ENCODE measurements at regions of chr2 and their contacts with region 1.

Region 1: DNA sequence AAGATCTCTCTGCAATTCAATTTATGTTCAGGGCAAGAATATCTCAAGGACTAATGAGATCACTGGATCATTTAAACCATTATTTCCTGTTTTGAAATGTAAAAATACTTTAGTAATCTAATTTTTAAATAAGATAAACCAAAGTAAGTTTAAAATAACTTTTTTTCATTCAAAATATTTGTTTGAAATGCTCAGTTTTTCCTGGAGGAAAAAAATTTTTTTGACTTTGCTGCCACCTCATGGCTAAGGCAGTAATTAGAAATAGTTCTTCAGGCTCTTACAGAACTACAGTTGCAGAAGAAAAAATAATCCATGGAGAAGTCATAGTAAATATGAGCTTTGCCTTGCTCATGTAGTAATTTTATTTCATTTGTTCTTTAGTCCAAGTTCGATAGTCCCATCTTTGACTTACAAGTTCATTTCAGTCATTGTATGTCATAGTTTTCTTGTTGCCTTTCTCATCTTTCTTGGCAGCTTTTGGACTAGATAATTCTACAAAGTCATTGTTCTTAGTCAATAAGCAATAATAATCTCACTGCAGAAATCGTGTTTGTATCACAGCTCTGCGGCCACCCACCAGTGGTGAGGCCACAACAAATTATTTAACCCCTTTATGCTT is 127.4 kb downstream of the DPP4 start:
- DNase-seq: no peak
- H3K4me3 ChIP-seq: no peak overlapping the region
- H3K27me3 ChIP-seq: no peaks in the 10 kb centered on the region
- CTCF ChIP-seq: peak; percentile 58

Region 2: DNA sequence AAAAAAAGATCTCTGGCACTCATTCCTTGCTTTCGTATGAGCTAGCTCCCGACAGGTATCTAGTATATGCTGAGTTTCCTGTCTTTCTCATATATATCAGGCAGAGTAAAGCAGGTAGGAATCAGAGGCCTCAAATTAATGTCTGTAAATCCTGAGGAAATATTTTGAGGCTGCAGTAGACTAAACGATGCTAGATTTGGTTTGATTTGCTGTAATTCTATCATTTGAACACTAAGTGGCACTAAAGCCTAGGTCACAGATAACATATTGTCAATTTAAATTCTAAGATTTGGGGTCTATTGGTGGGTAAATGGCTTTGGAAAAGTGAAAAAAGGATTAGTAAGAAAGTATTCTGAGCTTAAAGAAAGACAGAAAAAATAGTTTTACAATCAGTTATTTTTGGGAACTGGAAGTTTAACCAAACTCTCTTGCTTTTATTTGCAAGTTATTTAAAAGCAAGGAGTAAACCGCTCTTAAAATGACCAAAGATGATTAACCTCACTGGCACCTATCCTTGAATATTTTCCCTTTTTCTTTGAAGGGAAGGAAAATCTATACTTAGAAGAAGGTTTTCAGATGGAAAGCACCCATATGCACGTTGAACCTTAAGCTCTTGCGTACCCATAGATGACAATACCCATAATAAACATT is 360.0 kb before region 1 on chr2:
- CTCF ChIA-PET with region 1: interaction called, 37 read pairs
- POLR2A ChIA-PET with region 1: no interaction called
- DNase-seq: peak; percentile 1
- H3K4me3 ChIP-seq: no peak overlapping the region
- H3K27me3 ChIP-seq: no peaks in the 10 kb centered on the region
- CTCF ChIP-seq: peak; percentile 62

Region 3: DNA sequence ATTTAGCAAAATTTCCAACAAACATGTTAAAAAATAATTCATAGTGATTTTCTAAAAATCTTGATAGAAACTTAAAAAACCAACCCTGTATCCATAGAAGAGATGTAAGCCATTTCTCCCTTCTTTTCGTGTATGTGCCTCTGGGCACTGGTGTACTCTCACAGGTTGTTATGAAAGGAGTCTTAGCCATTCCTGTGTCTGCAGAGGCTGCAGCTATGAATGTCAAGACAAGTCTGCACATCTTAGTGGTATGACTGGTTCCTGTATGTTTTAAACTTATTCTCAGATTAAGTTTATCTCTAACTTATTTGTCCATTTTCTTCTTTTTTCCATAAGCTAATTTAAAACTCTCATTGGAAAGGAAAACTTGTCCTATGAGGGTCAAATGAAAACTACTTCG is 43.4 kb after region 1 on chr2:
- CTCF ChIA-PET with region 1: no interaction called
- POLR2A ChIA-PET with region 1: no interaction called
- DNase-seq: no peak
- H3K4me3 ChIP-seq: no peak overlapping the region
- H3K27me3 ChIP-seq: no peaks in the 10 kb centered on the region
- CTCF ChIP-seq: no peak